ENCODE measurements at regions of chr7 and their contacts with region 1.

Region 1: DNA sequence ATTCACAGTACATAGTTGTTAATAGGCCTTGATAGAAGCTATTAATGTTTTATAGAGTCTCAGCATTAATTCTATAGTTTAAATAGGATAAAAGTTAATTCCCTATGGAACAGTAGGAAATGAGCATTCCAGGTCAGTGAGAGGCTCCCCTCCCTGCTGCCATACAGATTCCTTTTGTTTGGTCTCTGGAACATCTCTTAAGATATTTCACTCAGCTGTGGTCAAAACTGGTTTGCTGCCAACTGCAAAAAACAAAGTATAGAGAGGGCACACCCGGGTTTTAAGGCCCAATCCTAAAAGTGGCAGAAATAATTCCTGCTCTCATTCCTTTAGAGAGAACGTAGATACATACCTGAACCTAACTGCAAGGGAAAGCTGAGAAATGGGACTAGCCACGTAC is 51.3 kb downstream of the MDFIC start:
- DNase-seq: no peak
- CTCF ChIP-seq: no peak

Region 2: DNA sequence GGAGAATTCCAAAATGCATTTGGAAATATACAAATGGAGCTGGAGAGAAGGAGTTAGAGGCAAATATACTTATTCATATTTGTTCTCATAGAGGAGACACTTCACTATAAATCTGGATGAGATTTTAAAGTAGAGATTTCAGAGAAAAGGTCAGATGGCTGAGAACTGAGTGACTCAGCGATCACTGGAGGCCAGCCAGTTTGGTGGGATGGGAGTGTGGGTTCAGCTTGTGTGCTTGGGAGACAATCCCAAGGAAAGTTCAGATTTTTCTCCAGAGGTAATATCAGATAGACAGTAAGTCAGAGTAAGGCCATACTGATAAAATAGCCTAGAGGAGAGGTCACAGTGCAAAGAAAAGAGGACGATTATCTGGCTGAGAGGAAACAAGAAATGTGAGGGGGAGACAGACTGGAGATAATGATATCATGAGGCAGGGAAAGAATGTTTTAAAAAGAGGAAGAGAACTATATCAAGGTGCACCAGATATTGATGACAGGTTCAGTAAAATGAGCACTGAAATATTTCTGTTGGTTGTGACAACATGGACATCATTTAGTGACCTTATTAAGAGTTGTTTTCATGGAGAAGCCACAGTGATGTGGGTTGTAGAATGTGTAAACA is 15.7 kb after region 1 on chr7:
- CTCF ChIA-PET with region 1: interaction called, 15 read pairs
- POLR2A ChIA-PET with region 1: no interaction called
- DNase-seq: no peak
- CTCF ChIP-seq: no peak

Measured in GM10248 (cell line).